Activated CD4-positive, alpha-beta memory T cell treated with anti-CD3 and anti-CD28 coated beads for 36 hours (primary cell): ENCODE measurements at regions of chr20 and their contacts with region 1.

Region 1: GRCh38 chr20:45436732-45437391 is 20.9 kb downstream of the PIGT start:
- DNase-seq: peak; percentile 90
- H3K4me3 Mint-ChIP-seq: peak overlapping the region; percentile 73
- H3K27ac Mint-ChIP-seq: no peak overlapping the region
- H3K4me1 Mint-ChIP-seq: peaks cover 15% of the 10 kb centered on the region
- H3K27me3 Mint-ChIP-seq: no peaks in the 10 kb centered on the region

Region 2: DNA sequence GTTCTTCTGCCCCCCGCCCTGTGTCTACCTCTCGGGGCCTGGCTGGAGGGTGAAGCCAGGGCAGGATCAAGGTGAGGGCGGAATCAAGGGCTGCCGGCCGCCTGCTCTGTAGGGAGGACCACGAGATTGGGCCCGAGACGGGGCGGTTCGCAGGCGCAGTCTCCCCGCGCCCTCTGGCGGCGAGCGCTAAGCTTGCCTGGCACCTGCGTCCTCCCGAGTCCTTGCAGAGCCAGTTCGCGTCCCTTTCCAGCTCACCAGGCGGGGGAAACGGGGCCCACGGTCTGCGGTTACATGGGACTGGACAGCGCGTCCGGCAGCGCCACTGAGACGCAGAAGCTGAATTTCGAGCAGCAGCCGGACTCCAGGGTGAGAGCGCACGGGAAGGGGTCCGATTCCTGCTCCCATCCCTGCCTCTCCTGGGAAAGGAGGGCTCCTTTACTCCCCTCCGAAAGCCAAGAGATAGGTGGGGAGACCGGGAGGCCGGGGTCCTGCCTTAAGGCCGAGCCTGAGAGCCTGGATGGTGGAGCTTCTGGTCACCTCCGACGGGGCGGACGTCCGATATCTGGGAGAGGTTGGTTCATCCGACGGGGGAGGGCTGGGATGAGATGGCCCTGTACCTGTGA is 125.2 kb before region 1 on chr20:
- CTCF ChIA-PET with region 1: interaction called, 133 read pairs
- POLR2A ChIA-PET with region 1: no interaction called
- intact Hi-C with region 1: no loop called
- DNase-seq: peak; percentile 78
- H3K4me3 Mint-ChIP-seq: no peak overlapping the region
- H3K27ac Mint-ChIP-seq: no peak overlapping the region
- H3K4me1 Mint-ChIP-seq: peaks cover 8% of the 10 kb centered on the region
- H3K27me3 Mint-ChIP-seq: peaks cover 32% of the 10 kb centered on the region

Region 3: GRCh38 chr20:45347936-45348778 is 88.7 kb before region 1 on chr20 and contains the start of gene SDC4:
- CTCF ChIA-PET with region 1: interaction called, 33 read pairs
- POLR2A ChIA-PET with region 1: interaction called, 3 read pairs
- intact Hi-C with region 1: no loop called
- DNase-seq: peak; percentile 76
- H3K4me3 Mint-ChIP-seq: peak within 1 kb of the TSS; percentile 86
- H3K27ac Mint-ChIP-seq: peak within 1 kb of the TSS; percentile 76
- H3K4me1 Mint-ChIP-seq: peaks cover 43% of the 10 kb centered on the region
- H3K27me3 Mint-ChIP-seq: no peaks in the 10 kb centered on the region
- total RNA-seq, gene SDC4: 67.8 to 69.8 TPM

Region 4: GRCh38 chr20:45362804-45363610 is 73.9 kb before region 1 on chr20 and contains the start of gene SYS1:
- CTCF ChIA-PET with region 1: interaction called, 503 read pairs
- POLR2A ChIA-PET with region 1: interaction called, 9 read pairs
- intact Hi-C with region 1: loop called (anchors 1 kb)
- DNase-seq: peak; percentile 99
- H3K4me3 Mint-ChIP-seq: peak within 1 kb of the TSS; percentile 96
- H3K27ac Mint-ChIP-seq: peak within 1 kb of the TSS; percentile 94
- H3K4me1 Mint-ChIP-seq: peaks cover 46% of the 10 kb centered on the region
- H3K27me3 Mint-ChIP-seq: no peaks in the 10 kb centered on the region
- total RNA-seq, gene SYS1: 19.9 to 24.8 TPM

Region 5: GRCh38 chr20:45415774-45416637 is 20.9 kb before region 1 on chr20 and contains the start of gene PIGT:
- CTCF ChIA-PET with region 1: interaction called, 23 read pairs
- POLR2A ChIA-PET with region 1: interaction called, 7 read pairs
- intact Hi-C with region 1: no loop called
- DNase-seq: peak; percentile 93
- H3K4me3 Mint-ChIP-seq: peak within 1 kb of the TSS; percentile 91
- H3K27ac Mint-ChIP-seq: peak within 1 kb of the TSS; percentile 97
- H3K4me1 Mint-ChIP-seq: peaks cover 47% of the 10 kb centered on the region
- H3K27me3 Mint-ChIP-seq: no peaks in the 10 kb centered on the region
- total RNA-seq, gene PIGT: 41.5 to 44.4 TPM